Psoas muscle (tissue), 8 donors: ENCODE measurements at regions of chr4 and their contacts with region 1.

Region 1: DNA sequence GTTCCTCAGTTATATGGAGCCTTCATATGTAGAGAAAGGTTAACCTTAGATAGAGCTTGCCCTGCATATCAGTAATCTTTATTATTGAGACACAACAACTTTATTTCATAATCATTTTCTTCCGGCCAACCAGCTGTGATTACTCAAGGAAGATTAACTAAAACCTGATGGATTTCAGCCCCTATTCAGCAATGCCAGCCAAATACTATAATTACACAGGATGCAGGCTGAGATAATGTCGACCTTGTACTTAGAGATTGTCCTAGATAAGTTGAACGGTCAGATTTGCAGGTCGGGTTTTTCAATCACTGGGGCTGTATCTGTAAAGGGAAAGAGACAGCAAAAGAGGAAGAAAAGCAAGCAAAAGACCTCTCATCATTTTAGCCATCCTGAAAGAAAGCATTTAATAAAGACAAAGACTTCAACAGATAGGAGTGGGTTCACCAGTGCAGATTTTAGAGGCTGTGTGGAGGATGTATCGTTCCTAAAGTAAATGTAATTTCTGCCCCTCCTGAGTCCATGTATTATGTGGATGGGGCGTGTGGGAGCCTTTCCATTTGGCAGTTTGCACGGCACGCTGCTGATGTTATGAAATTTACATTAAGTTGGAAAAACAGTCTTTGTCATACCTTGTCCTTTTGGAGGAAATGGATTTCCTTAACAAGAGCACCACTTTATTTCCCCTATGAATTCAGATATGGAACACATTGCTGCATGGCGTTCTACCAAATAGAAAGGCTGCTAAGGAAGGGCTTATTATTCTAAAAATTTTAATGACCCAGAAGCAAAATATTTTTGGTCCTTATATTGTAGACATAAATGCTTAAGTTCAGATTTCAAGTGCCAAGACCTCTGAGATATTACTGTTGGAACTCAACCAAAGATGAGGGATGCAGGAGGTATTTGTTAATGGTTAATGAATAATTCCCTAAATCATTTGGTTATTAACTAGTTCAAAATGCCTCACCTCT is 496.7 kb downstream of the SPRY1 start:
- DNase-seq: no peak
- ATAC-seq: peak; percentile 18 to 64 (median 40)
- H3K4me3 ChIP-seq: peak overlapping the region; percentile 5
- H3K27ac ChIP-seq: peak overlapping the region; percentile 47
- H3K4me1 ChIP-seq: peaks cover 38% of the 10 kb centered on the region
- H3K27me3 ChIP-seq: no peaks in the 10 kb centered on the region
- CTCF ChIP-seq: no peak

Region 2: DNA sequence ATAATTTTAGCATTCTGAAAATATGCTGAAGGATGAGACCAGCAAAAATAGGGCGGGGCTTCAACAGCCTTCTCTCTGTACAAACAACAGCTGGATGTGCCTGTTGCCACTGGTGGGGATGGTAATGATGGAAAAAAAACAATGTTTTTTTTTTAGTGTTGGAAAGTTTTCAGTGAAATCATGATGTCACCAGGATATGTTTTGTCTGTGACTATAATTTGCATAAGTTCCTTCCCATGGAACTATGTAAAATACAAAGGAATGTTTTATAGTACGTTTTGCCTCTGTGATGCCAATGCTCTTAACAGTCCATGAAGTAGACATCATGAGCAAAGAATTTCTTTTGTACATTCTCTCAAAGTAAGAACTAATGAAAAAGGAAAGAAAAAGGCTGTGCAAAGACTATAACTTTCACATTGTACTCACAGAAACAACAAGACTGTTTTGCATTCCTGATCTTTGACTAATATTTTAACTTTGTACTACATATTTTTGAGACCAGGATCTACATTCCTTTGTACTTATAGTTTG is 93.0 kb after region 1 on chr4:
- intact Hi-C with region 1: loop called in 1 of 2 experiments (anchors 10 kb)
- DNase-seq: peak; percentile 38 to 64
- ATAC-seq: peak; percentile 41 to 84 (median 58)
- H3K4me3 ChIP-seq: no peak overlapping the region
- H3K27ac ChIP-seq: peak overlapping the region; percentile 56
- H3K4me1 ChIP-seq: peaks cover 13% of the 10 kb centered on the region
- H3K27me3 ChIP-seq: no peaks in the 10 kb centered on the region
- CTCF ChIP-seq: no peak